ENCODE measurements at regions of chr2 and their contacts with region 1.

Region 1: DNA sequence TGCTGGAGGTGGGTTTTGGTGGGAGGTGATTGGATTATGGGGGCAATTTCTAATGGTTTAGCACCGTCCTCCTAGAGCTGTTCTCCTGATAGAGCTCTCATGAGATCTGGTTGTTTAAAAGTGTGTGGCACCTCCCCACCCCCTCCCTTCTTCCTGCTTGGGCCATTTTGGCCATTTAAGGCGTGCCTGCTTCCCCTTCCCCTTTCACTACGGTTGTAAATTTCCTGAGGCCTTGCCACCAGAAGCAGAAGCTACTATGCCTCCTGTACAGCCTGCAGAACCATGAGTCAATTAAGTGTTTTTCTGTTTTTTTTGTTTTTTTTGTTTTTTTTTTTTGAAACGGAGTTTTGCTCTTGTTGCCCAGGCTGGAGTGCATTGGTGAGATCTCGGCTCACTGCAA is 335.7 kb upstream of the HS6ST1 start:
- DNase-seq: no peak
- H3K4me3 ChIP-seq: no peak overlapping the region
- H3K27me3 ChIP-seq: peaks cover 5% of the 10 kb centered on the region
- CTCF ChIP-seq: no peak

Region 2: GRCh38 chr2:128667391-128667790 is 13.0 kb after region 1 on chr2:
- CTCF ChIA-PET with region 1: no interaction called
- POLR2A ChIA-PET with region 1: no interaction called
- DNase-seq: no peak
- H3K4me3 ChIP-seq: no peak overlapping the region
- H3K27me3 ChIP-seq: peaks cover 4% of the 10 kb centered on the region; the same call in 1 of the 2 replicates
- CTCF ChIP-seq: no peak

Region 3: GRCh38 chr2:129252781-129253460 is 598.5 kb after region 1 on chr2:
- CTCF ChIA-PET with region 1: no interaction called
- POLR2A ChIA-PET with region 1: interaction called, 10 read pairs
- DNase-seq: no peak
- H3K4me3 ChIP-seq: no peak overlapping the region
- H3K27me3 ChIP-seq: no peaks in the 10 kb centered on the region
- CTCF ChIP-seq: no peak